Prostate gland (tissue), 2 donors: ENCODE measurements at regions of chr2 and their contacts with region 1.

Region 1: GRCh38 chr2:108927936-108928659 is 60.9 kb downstream of the EDAR start:
- DNase-seq: peak; percentile 50
- H3K4me3 ChIP-seq: no peak overlapping the region
- H3K27ac ChIP-seq: no peak overlapping the region
- H3K4me1 ChIP-seq: no peaks in the 10 kb centered on the region
- H3K27me3 ChIP-seq: no peaks in the 10 kb centered on the region
- CTCF ChIP-seq: peak; percentile 62 to 83 (median 78)
- POLR2A ChIP-seq: no peak

Region 2: DNA sequence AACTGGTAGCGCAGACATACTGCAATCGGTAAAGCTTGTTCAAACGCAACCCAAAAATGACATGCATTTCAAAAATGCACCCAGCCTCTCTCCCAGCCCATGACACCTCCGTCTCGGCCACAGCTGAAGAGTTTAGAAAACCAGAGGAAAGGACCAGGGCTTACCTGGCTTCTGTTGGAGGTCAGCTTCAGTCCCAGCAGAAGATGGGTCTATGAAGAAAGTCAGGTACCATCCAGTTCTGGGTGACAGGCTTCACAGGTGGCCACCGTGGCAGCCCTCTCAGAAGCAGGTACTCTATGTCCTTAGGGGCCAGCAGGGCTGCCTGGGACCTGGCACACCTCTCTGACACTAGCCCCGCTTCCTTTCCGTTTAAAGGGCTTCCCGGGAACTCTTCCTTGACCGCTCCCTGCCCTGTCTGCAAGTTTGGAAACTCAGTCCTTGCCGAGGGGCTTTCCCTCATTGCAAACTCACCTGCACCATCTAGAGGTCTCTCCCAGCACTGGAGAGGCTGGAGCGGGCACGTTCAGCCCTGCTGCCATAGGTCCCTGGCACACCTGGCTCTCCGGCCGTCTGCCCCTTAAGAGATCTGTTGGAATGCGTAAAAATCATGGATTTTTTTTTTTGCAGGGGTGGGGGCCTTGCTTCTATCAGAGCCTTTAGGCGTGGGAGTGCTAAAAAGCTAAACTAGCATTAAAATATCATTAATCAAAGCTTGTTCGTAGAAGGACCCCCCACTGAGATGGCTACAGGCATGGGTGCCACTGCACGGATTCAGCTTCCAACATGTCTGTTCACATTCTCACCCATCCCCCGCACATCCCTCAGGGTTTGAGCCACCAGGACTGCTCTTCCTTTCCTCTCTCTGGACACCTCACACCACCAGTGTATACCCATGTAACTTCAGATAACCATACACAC is 61.0 kb after region 1 on chr2 and contains the start of gene EDAR:
- intact Hi-C with region 1: loop called (anchors 2 kb)
- DNase-seq: peak; percentile 66
- H3K4me3 ChIP-seq: peak within 1 kb of the TSS; percentile 0 to 16
- H3K27ac ChIP-seq: no peak within 1 kb of the TSS
- H3K4me1 ChIP-seq: peaks cover 6% of the 10 kb centered on the region
- H3K27me3 ChIP-seq: no peaks in the 10 kb centered on the region
- CTCF ChIP-seq: peak; percentile 23 to 78 (median 59)
- POLR2A ChIP-seq: peak; percentile 17
- total RNA-seq, gene EDAR: 0.46 to 0.68 TPM

Region 3: GRCh38 chr2:109089602-109090300 is 161.7 kb after region 1 on chr2:
- intact Hi-C with region 1: no loop called
- DNase-seq: no peak
- H3K4me3 ChIP-seq: no peak overlapping the region
- H3K27ac ChIP-seq: no peak overlapping the region
- H3K4me1 ChIP-seq: no peaks in the 10 kb centered on the region
- H3K27me3 ChIP-seq: no peaks in the 10 kb centered on the region
- CTCF ChIP-seq: no peak
- POLR2A ChIP-seq: no peak

Region 4: DNA sequence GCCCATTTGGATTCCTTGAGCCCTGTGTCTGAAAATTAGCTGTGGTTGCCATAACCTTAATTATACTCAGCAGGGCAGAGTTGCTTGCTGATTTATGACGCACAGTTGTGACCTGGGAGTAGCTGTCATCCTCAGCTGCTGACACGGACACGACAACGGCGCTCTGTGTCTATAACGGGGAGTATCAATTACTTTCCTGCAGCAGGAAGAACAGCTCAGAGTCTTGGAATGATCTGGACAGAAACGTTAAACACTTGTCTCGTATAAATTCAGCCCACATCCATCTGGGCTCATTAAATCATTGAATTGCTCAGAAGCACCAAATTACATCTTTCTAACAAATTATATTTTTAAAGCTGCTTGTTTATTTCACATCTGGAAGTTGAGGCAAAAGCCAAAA is 569.4 kb after region 1 on chr2:
- intact Hi-C with region 1: loop called (anchors 10 kb)
- DNase-seq: no peak
- H3K4me3 ChIP-seq: no peak overlapping the region
- H3K27ac ChIP-seq: no peak overlapping the region
- H3K4me1 ChIP-seq: peaks cover 12% of the 10 kb centered on the region
- H3K27me3 ChIP-seq: no peaks in the 10 kb centered on the region
- CTCF ChIP-seq: no peak
- POLR2A ChIP-seq: no peak